ENCODE measurements at regions of chr4 and their contacts with region 1.

Region 1: DNA sequence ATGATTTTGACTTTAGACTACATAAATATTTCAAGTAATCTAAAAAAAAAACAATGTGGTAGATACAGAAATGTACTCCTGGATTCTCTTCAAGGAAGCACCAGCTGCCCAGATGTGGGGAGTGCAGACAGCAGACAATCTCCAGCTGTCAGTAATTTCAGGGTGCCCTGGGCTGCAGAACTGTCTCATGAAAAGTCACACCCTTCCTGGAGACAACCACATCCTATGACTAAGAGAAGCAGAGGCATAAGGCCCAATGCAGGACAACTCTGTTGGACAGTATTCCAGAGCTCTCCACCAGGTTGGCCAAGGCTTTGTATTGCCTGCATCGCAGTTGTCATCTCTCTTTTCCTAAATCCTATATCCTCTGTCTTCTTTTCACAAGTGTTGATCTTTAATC is 34.4 kb upstream of the BLTP1 start:
- DNase-seq: peak; percentile 18 to 48 (median 24)
- H3K4me3 ChIP-seq: no peak overlapping the region
- H3K4me3 Mint-ChIP-seq: peak overlapping the region in 7 of 8 donors; percentile 15 to 73 (median 40)
- H3K27ac ChIP-seq: no peak overlapping the region
- H3K27ac Mint-ChIP-seq: peak overlapping the region; percentile 24 to 93 (median 67)
- H3K4me1 ChIP-seq: peaks cover 25% of the 10 kb centered on the region
- H3K4me1 Mint-ChIP-seq: peaks cover 20 to 29% (median 24%) of the 10 kb centered on the region in 4 donors
- H3K27me3 ChIP-seq: no peaks in the 10 kb centered on the region
- H3K27me3 Mint-ChIP-seq: no peaks in the 10 kb centered on the region

Region 2: GRCh38 chr4:122003335-122003734 is 114.4 kb before region 1 on chr4:
- CTCF ChIA-PET with region 1: no interaction called
- POLR2A ChIA-PET with region 1: no interaction called
- intact Hi-C with region 1: no loop called
- DNase-seq: peak in 4 of 5 donors; percentile 3 to 33 (median 16)
- H3K4me3 ChIP-seq: no peak overlapping the region
- H3K4me3 Mint-ChIP-seq: no peak overlapping the region
- H3K27ac ChIP-seq: no peak overlapping the region
- H3K27ac Mint-ChIP-seq: no peak overlapping the region
- H3K4me1 ChIP-seq: no peaks in the 10 kb centered on the region
- H3K4me1 Mint-ChIP-seq: peaks cover 0 to 4% (median 0%) of the 10 kb centered on the region in 4 donors
- H3K27me3 ChIP-seq: no peaks in the 10 kb centered on the region
- H3K27me3 Mint-ChIP-seq: peaks cover 8 to 9% of the 10 kb centered on the region in 2 donors

Region 3: GRCh38 chr4:122086338-122087065 is 31.2 kb before region 1 on chr4:
- CTCF ChIA-PET with region 1: no interaction called
- POLR2A ChIA-PET with region 1: no interaction called
- intact Hi-C with region 1: no loop called
- DNase-seq: no peak
- H3K4me3 ChIP-seq: no peak overlapping the region
- H3K4me3 Mint-ChIP-seq: no peak overlapping the region
- H3K27ac ChIP-seq: no peak overlapping the region
- H3K27ac Mint-ChIP-seq: peak overlapping the region in 1 of 7 donors; percentile 32
- H3K4me1 ChIP-seq: no peaks in the 10 kb centered on the region
- H3K4me1 Mint-ChIP-seq: no peaks in the 10 kb centered on the region
- H3K27me3 ChIP-seq: no peaks in the 10 kb centered on the region
- H3K27me3 Mint-ChIP-seq: peaks cover 0 to 1% of the 10 kb centered on the region in 2 donors

Region 4: GRCh38 chr4:122131562-122132157 is 13.9 kb after region 1 on chr4:
- CTCF ChIA-PET with region 1: interaction called, 6 read pairs
- POLR2A ChIA-PET with region 1: interaction called, 21 read pairs
- intact Hi-C with region 1: no loop called
- DNase-seq: peak in 4 of 5 donors; percentile 43 to 62 (median 53)
- H3K4me3 ChIP-seq: no peak overlapping the region
- H3K4me3 Mint-ChIP-seq: peak overlapping the region; percentile 13 to 74 (median 54)
- H3K27ac ChIP-seq: peak overlapping the region; percentile 11
- H3K27ac Mint-ChIP-seq: peak overlapping the region; percentile 28 to 95 (median 89)
- H3K4me1 ChIP-seq: peaks cover 21% of the 10 kb centered on the region
- H3K4me1 Mint-ChIP-seq: peaks cover 16 to 34% (median 22%) of the 10 kb centered on the region in 4 donors
- H3K27me3 ChIP-seq: no peaks in the 10 kb centered on the region
- H3K27me3 Mint-ChIP-seq: no peaks in the 10 kb centered on the region

Region 5: DNA sequence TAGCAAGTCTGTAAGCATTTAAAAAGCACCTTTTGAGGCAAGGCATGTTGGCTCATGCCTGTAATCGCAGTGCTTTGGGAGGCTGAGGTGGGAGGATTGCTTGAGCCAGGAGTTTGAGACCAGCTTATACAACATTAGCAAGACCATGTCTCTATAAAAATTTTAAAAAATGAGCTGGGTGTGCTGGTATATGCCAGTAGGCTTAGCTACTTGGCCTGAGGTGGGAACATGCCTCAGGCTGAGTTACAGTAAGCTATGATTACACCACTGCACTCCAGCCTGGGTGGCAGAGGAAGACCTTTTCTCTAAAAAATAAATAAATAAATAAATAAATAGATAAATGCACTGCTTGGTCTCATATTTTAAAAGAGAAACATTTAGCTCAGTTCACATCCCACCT is 61.2 kb after region 1 on chr4:
- CTCF ChIA-PET with region 1: no interaction called
- POLR2A ChIA-PET with region 1: no interaction called
- intact Hi-C with region 1: no loop called
- DNase-seq: no peak
- H3K4me3 ChIP-seq: no peak overlapping the region
- H3K4me3 Mint-ChIP-seq: no peak overlapping the region
- H3K27ac ChIP-seq: no peak overlapping the region
- H3K27ac Mint-ChIP-seq: no peak overlapping the region
- H3K4me1 ChIP-seq: no peaks in the 10 kb centered on the region
- H3K4me1 Mint-ChIP-seq: peaks cover 0 to 9% (median 2%) of the 10 kb centered on the region in 4 donors
- H3K27me3 ChIP-seq: no peaks in the 10 kb centered on the region
- H3K27me3 Mint-ChIP-seq: no peaks in the 10 kb centered on the region